ENCODE measurements at regions of chr1 and their contacts with region 1.

Region 1: DNA sequence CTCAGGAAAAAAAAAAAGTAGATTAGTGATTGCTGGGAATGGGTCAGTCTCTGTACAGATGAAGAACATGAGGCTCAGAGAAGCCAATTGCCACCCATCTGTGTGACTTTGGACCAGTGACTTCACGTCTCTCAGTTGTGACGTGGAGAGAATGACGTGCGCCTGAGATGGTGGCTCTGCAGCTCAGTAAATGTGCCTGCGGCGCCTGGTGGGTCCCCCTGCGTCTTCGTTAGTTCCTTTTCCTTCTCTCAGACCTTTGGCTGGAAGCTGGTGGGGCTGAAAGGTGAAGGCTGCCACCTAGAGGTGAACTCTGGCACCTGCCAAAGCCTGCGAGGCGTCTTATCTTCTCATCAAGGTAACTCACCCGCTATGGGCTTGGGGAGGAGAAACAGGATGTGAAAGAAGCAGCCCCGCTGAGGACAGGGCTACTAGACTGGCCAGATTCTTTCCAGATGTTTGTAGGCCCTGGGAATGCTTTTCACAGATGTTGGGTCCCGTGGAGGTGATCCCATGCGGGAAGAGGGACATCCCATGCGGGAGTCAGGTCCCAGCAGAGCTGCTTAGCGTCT is 8.7 kb upstream of the E2F2 start:
- DNase-seq: peak; percentile 85 to 95
- H3K4me3 ChIP-seq: peak overlapping the region; percentile 30; the same call in 1 of the 2 replicates
- H3K27ac ChIP-seq: no peak overlapping the region
- H3K4me1 ChIP-seq: peaks cover 24% of the 10 kb centered on the region
- H3K27me3 ChIP-seq: no peaks in the 10 kb centered on the region
- CTCF ChIP-seq: peak; percentile 90

Region 2: DNA sequence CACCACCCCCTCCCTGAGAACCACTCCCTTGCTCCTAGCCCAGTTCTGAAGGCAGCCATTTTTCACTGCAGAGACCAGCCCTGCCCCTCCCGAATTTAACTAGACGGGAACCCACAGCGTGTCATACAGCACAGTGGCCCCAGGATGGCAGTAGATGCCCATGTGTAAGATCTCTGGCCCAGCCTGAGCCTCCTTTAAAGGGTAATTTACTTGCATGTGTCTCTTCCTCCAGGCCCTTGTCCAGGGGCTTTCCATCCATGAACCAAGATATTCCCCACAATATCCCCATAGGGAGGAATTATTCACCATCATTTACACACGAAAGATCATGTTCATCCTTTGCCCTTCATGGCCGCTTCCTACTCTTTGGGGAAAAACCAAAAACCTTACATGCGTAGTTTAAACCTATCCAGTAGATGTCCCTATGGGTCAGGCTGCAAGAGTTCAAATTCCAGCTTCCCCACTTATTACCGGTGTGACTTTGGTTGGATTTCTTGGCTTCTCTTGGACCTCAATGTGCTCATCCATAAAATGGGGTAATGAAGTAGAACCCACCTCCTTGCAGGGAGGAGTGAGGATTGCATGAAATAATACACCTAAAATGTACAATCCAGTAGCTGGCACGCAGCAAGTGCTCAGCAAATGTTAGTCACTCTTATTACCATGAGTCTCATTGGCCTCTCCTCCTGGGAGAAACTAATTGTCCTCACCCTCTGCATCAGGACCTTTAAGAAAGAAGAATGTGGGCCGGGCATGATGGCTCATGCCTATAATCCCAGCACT is 563.1 kb before region 1 on chr1:
- CTCF ChIA-PET with region 1: no interaction called
- POLR2A ChIA-PET with region 1: no interaction called
- intact Hi-C with region 1: loop called (anchors 1 kb)
- DNase-seq: peak; percentile 70 to 74
- H3K4me3 ChIP-seq: no peak overlapping the region
- H3K27ac ChIP-seq: peak overlapping the region; percentile 37; the same call in 1 of the 2 replicates
- H3K4me1 ChIP-seq: peaks cover 49% of the 10 kb centered on the region
- H3K27me3 ChIP-seq: no peaks in the 10 kb centered on the region
- CTCF ChIP-seq: peak; percentile 91

Region 3: DNA sequence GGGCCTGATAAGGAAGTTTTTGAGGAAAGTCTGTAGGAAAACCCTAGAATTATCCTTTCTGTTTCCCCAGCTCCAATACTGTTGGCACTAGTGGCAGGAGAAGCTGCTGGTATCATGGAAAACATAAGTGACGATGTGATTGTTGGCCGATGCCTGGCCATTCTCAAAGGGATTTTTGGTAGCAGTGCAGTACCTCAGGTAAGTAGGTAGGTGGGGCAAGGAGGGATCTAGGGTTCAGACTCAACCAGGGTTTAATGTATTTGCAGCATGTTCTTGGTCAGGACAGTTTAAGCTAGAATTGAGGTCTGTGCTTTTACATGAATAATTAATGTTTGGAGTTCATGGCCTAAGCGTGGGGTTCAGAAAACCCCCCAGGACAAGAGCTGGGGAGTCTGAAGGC is 458.4 kb before region 1 on chr1:
- CTCF ChIA-PET with region 1: no interaction called
- POLR2A ChIA-PET with region 1: no interaction called
- intact Hi-C with region 1: loop called (anchors 5 kb)
- DNase-seq: no peak
- H3K4me3 ChIP-seq: no peak overlapping the region
- H3K27ac ChIP-seq: no peak overlapping the region
- H3K4me1 ChIP-seq: no peaks in the 10 kb centered on the region
- H3K27me3 ChIP-seq: no peaks in the 10 kb centered on the region
- CTCF ChIP-seq: peak; percentile 53

Region 4: GRCh38 chr1:23367791-23368561 is 171.8 kb before region 1 on chr1:
- CTCF ChIA-PET with region 1: interaction called, 3 read pairs
- POLR2A ChIA-PET with region 1: no interaction called
- intact Hi-C with region 1: loop called (anchors 10 kb)
- DNase-seq: peak; percentile 95 to 99
- H3K4me3 ChIP-seq: peak overlapping the region; percentile 96
- H3K27ac ChIP-seq: peak overlapping the region; percentile 84
- H3K4me1 ChIP-seq: peaks cover 37% of the 10 kb centered on the region
- H3K27me3 ChIP-seq: no peaks in the 10 kb centered on the region
- CTCF ChIP-seq: 0 out of 2 replicates have a peak, but pooled peaks have one; percentile 22

Region 5: GRCh38 chr1:23577056-23578004 is 37.5 kb after region 1 on chr1:
- CTCF ChIA-PET with region 1: no interaction called
- POLR2A ChIA-PET with region 1: no interaction called
- intact Hi-C with region 1: no loop called
- DNase-seq: peak in 1 of 2 experiments; percentile 84
- H3K4me3 ChIP-seq: no peak overlapping the region; the same call in 1 of the 2 replicates
- H3K27ac ChIP-seq: peak overlapping the region; percentile 93
- H3K4me1 ChIP-seq: peaks cover 55% of the 10 kb centered on the region
- H3K27me3 ChIP-seq: no peaks in the 10 kb centered on the region
- CTCF ChIP-seq: no peak

Region 6: GRCh38 chr1:23634842-23635651 is 95.3 kb after region 1 on chr1:
- CTCF ChIA-PET with region 1: interaction called, 39 read pairs
- POLR2A ChIA-PET with region 1: no interaction called
- intact Hi-C with region 1: loop called (anchors 1 kb)
- DNase-seq: peak; percentile 59 to 62
- H3K4me3 ChIP-seq: peak overlapping the region; percentile 54; the same call in 1 of the 2 replicates
- H3K27ac ChIP-seq: peak overlapping the region; percentile 30; the same call in 1 of the 2 replicates
- H3K4me1 ChIP-seq: no peaks in the 10 kb centered on the region
- H3K27me3 ChIP-seq: no peaks in the 10 kb centered on the region
- CTCF ChIP-seq: peak; percentile 80

Region 7: DNA sequence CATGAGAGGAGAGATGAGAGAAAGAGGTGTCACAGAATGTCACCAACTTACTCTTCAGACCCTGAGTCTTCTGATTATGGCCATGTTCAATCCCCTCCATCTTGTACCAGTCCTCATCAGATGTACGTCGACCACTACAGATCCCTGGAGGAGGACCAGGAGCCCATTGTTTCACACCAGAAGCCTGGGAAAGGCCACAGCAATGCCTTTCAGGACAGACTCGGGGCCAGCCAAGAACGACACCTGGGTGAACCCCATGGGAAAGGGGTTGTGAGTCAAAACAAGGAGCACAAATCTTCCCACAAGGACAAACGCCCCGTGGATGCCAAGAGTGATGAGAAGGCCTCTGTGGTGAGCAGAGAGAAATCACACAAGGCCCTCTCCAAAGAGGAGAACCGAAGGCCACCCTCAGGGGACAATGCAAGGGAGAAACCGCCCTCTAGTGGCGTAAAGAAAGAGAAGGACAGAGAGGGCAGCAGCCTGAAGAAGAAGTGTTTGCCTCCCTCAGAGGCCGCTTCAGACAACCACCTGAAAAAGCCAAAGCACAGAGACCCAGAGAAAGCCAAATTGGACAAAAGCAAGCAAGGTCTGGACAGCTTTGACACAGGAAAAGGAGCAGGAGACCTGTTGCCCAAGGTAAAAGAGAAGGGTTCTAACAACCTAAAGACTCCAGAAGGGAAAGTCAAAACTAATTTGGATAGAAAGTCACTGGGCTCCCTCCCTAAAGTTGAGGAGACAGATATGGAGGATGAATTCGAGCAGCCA is 211.4 kb after region 1 on chr1:
- CTCF ChIA-PET with region 1: no interaction called
- POLR2A ChIA-PET with region 1: no interaction called
- intact Hi-C with region 1: loop called (anchors 1 kb)
- DNase-seq: peak in 1 of 2 experiments; percentile 20
- H3K4me3 ChIP-seq: no peak overlapping the region
- H3K27ac ChIP-seq: no peak overlapping the region
- H3K4me1 ChIP-seq: no peaks in the 10 kb centered on the region
- H3K27me3 ChIP-seq: no peaks in the 10 kb centered on the region
- CTCF ChIP-seq: peak; percentile 74

Region 8: DNA sequence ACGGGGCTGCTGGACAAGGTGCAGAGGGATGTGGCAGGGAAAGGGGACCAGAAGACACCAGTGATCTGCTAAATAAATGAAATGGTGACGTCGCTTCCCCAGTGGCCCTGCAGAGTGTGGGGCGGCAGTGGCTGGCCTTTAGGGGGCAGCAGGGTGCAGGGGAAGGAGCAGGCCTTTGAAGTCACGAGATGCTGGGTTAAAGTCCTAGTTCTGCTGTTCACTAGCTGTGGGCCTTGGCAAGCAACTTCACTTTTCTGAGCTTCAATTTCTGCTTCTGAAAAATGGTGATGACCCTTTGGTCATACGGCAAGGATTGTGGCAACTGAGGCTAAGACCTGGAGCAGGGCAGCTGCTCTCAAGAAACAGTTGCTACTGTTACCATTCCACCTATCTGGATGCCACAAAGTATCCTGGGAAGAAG is 270.0 kb after region 1 on chr1:
- CTCF ChIA-PET with region 1: no interaction called
- POLR2A ChIA-PET with region 1: no interaction called
- intact Hi-C with region 1: no loop called
- DNase-seq: peak in 1 of 2 experiments; percentile 66
- H3K4me3 ChIP-seq: no peak overlapping the region
- H3K27ac ChIP-seq: no peak overlapping the region
- H3K4me1 ChIP-seq: no peaks in the 10 kb centered on the region
- H3K27me3 ChIP-seq: no peaks in the 10 kb centered on the region
- CTCF ChIP-seq: peak; percentile 68

Region 9: DNA sequence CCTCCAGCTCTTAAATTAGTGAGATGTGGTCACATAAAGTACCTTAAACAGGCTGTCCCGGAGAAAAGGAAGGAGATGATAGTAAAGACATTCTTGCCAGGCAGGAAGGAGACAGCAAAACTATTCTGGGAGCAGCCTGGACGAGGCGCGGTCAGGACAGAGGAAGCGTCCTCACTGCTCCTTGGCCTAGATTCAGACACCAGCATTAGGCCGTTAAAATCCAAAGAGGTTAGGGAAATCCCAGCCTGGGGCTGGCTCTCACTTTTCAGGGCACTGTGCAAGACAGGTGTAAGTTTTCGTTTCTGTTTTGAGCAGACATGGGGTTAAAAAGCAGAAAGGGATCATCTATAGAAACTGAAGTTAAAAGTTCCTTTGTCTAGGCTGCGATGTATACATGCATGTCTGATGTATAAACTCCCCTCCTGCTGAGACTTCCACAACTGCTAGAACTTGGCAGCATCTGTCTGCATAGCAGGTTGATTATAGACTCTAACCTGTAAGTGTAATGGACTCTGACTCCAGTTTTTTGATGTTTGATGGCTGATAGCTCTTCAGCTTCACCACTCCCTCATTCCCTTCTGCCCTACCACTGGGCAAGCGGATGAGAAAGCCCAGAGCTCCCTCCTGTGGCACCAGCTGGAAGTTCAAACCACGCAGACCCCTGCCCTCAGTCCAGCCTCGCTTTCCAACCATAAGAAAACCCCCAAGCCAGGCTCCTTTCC is 852.3 kb after region 1 on chr1:
- CTCF ChIA-PET with region 1: interaction called, 5 read pairs
- POLR2A ChIA-PET with region 1: no interaction called
- intact Hi-C with region 1: loop called (anchors 5 kb)
- DNase-seq: peak; percentile 47 to 50
- H3K4me3 ChIP-seq: no peak overlapping the region
- H3K27ac ChIP-seq: peak overlapping the region; percentile 14; the same call in 1 of the 2 replicates
- H3K4me1 ChIP-seq: peaks cover 8% of the 10 kb centered on the region
- H3K27me3 ChIP-seq: no peaks in the 10 kb centered on the region
- CTCF ChIP-seq: peak; percentile 80